Heart left ventricle (tissue), 16 donors: ENCODE measurements at regions of chr2 and their contacts with region 1.

Region 1: DNA sequence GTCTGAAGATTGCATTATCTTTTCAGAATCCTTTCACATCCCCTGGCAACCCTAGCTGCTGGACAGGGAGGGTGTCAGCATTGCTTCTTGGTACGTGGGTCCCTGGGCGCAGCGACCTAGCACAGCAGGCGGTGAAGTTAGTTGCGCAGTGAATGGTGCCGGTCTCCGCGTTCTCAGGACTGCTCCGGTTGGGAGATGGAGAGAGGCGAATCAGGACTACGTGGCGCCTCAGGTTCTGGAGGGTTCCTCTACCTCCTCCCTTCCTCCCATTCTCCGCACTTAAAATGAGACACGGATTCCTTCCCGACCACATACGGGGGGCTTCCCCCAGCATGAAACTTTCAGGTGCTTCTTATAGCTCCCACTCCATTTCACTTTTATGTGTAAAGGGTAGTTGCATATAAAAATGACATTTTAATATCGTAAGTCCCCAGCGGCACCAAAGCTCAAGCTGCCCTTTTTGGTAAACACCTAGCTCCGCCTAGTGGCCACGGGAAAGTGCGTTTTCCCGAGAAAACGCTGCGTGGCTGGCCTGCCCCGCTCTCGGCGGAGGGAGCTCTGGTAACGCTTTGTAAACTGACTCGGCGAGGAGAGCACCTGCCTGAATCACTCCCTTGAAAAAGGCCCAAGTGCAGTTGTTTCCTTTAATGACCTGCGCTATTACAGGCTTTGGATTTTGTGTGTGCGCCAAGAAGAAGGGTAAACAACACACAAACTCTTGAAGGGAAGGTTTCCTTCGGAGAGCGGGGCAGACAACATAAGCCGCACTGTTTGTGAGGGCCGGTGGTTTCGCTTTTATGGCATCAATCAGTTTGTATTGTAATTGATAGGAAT is 32.9 kb upstream of the INHBB start:
- DNase-seq: peak; percentile 74 to 89 (median 83)
- ATAC-seq: peak; percentile 60 to 87 (median 81)
- H3K4me3 ChIP-seq: peak overlapping the region in 11 of 12 donors; percentile 9 to 62 (median 47)
- H3K27ac ChIP-seq: peak overlapping the region in 4 of 12 donors; percentile 11 to 32 (median 14)
- H3K4me1 ChIP-seq: peaks cover 0 to 14% (median 7%) of the 10 kb centered on the region in 12 donors
- H3K27me3 ChIP-seq: no peaks in the 10 kb centered on the region
- CTCF ChIP-seq: peak; percentile 66 to 95 (median 88)
- POLR2A ChIP-seq: no peak

Region 2: GRCh38 chr2:119753041-119753929 is 559.8 kb before region 1 on chr2:
- intact Hi-C with region 1: loop called in 2 of 10 experiments (anchors 2 to 10 kb)
- DNase-seq: no peak
- ATAC-seq: peak; percentile 58 to 72 (median 61)
- H3K4me3 ChIP-seq: no peak overlapping the region
- H3K27ac ChIP-seq: no peak overlapping the region
- H3K4me1 ChIP-seq: peaks cover 0 to 10% (median 1%) of the 10 kb centered on the region in 12 donors
- H3K27me3 ChIP-seq: no peaks in the 10 kb centered on the region
- CTCF ChIP-seq: peak; percentile 67 to 86 (median 79)
- POLR2A ChIP-seq: no peak

Region 3: DNA sequence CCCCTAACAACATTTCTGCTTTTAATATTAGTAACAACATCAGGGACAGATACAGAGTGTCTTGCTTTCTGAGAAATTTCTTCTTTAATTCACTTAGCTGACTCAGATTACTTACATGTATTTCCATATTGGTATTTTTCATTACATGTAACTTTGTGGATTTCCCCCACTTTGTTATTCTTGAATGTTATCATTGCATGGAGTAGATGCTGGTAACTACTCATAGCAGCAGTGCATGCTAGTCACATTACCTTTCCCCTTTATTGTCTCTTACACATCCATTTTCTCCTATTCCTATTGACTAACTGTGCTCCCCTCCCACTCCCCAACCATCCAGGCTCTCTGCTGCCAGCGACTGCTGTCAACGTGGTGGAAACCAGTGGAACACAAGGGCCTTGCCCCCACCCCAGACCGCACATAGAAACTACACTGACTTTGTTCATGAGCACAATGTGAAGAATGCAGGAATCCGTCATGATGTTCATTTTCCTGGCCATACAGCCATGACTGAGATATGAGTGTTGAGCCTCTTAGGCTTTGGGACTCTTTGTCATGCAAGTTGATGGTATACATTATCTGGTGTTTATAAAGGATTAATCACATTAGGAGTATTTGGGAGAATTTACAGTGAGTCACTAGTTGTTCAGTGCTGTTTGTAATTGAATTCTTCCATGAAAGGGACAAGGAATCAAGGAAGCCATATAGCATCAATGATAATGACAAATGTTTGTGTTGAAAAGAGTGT is 209.2 kb before region 1 on chr2:
- intact Hi-C with region 1: loop called in 5 of 10 experiments (anchors 2 to 10 kb)
- DNase-seq: no peak
- ATAC-seq: no peak
- H3K4me3 ChIP-seq: no peak overlapping the region
- H3K27ac ChIP-seq: no peak overlapping the region
- H3K4me1 ChIP-seq: peaks cover 3 to 17% (median 14%) of the 10 kb centered on the region in 12 donors
- H3K27me3 ChIP-seq: no peaks in the 10 kb centered on the region
- CTCF ChIP-seq: no peak
- POLR2A ChIP-seq: no peak

Region 4: DNA sequence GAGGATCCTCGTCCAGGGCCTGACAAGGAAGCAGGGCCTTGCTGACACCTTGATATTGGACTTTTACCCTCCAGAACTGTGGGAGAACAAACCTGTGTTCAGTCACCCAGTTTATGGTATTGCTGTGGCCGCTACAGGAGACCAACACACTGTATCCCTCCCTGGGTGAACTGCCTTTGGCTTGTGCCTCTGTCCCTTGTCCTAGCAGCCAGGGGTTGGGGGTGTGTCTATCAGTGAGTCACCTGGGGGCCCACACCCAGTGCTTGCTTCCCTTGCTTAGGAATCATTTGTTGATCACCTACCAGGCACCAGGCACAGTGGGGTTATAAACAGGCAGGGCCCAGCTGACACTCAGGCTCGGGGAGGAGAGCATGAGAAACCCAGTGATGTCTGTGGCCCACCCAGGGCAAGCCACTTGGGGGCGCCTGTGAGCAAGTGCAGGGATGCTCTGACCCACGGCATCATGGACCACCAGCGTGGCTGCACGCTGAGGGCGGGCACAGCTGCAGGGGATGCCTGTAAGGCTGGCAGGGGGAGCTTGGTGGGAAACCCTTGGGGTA is 107.0 kb before region 1 on chr2:
- intact Hi-C with region 1: loop called in 1 of 10 experiments (anchors 5 kb)
- DNase-seq: no peak
- ATAC-seq: peak in 1 of 4 donors; percentile 20
- H3K4me3 ChIP-seq: no peak overlapping the region
- H3K27ac ChIP-seq: no peak overlapping the region
- H3K4me1 ChIP-seq: peaks cover 0 to 26% (median 7%) of the 10 kb centered on the region in 12 donors
- H3K27me3 ChIP-seq: no peaks in the 10 kb centered on the region
- CTCF ChIP-seq: peak in 11 of 12 donors; percentile 17 to 53 (median 38)
- POLR2A ChIP-seq: no peak

Region 5: GRCh38 chr2:120228531-120228930 is 84.5 kb before region 1 on chr2:
- intact Hi-C with region 1: loop called in 5 of 10 experiments (anchors 2 to 10 kb)
- DNase-seq: no peak
- ATAC-seq: peak in 1 of 4 donors; percentile 20
- H3K4me3 ChIP-seq: no peak overlapping the region
- H3K27ac ChIP-seq: no peak overlapping the region
- H3K4me1 ChIP-seq: peaks cover 0 to 45% (median 8%) of the 10 kb centered on the region in 12 donors
- H3K27me3 ChIP-seq: no peaks in the 10 kb centered on the region
- CTCF ChIP-seq: peak in 2 of 12 donors; percentile 9 to 18
- POLR2A ChIP-seq: no peak

Region 6: DNA sequence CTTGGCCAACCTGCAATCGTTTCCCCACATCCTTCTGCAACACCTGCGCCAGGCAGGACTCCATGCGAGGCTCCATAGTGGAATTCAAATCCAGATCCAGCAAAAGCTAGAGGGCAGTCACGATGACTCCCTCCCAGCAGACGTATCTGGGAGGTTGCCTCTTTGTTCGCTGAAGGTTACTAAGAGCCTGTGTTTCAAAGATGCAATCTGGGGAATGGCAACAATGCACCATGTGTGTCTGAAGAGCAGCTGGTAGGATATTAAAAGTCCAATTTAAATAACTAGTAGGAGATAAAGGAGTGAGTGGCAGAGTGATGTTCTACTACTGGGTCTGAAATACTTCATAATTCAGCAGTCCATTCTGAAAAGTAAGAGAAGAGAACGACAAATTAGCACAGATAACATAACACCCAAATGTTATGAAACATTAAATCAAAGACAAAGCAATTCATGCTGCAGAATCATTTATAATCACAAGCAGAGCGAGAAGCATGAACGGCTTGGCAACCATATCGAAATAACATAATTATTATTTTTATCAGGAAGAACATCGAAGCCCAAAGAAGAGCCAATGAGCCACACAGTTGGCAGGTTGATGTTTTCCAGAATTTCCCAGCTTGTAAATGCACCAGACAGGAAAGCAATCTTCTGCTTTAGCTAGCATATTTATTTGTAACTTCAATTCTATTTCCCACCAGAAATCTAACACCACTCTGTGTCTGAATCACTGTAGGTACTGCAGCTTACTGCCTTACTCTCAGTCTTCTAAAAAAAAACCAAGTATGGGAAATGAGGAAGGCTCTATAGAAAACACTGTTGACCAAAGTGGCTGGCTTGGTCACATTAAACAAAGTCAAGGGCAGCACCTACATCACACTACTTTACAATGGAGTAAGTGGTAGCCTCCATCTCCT is 1293.0 kb after region 1 on chr2:
- intact Hi-C with region 1: no loop called
- DNase-seq: no peak
- ATAC-seq: peak; percentile 38 to 71 (median 53)
- H3K4me3 ChIP-seq: no peak overlapping the region
- H3K27ac ChIP-seq: peak overlapping the region in 9 of 12 donors; percentile 4 to 69 (median 33)
- H3K4me1 ChIP-seq: peaks cover 0 to 76% (median 28%) of the 10 kb centered on the region in 12 donors
- H3K27me3 ChIP-seq: no peaks in the 10 kb centered on the region
- CTCF ChIP-seq: peak in 2 of 12 donors; percentile 12 to 26
- POLR2A ChIP-seq: no peak